ENCODE measurements at regions of chr12 and their contacts with region 1.

Region 1: DNA sequence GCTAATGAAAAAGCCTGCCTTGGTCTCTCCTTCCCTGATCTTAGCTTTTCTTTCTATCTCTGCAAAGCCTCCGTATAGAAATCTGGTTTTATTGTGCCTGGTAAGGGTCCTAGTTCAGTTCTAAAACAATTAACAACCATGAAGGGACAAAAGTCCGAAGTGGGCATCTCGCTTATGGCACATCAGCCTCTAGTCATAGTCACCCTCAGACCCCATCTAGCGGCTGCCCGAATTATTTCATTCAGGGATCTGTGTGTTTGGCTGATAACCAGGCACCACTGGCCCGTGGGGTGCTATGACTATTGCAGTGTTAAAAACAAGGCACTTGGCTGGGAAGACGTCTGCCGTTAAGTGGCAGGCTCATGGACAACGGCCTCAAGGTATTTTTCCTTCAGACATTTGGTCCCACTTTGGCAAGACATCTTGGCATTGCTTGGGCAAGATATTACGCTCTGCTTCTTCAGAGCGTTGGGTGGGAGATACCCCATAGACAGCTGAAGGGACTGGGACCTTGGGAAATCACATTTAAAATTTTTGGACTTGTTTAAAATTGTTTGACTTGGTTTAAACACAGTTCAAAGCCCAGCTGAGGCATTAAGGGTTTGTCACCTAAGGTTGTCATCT is 87.1 kb downstream of the SINHCAF start:
- DNase-seq: peak in 1 of 2 experiments; percentile 78
- H3K4me3 ChIP-seq: no peak overlapping the region
- H3K27ac ChIP-seq: no peak overlapping the region
- H3K4me1 ChIP-seq: peaks cover 0 to 5% (median 3%) of the 10 kb centered on the region in 4 experiments; a peak in 5 of 7 replicates
- H3K27me3 ChIP-seq: no peaks in the 10 kb centered on the region
- CTCF ChIP-seq: peak; percentile 62 to 78 (median 76)
- EP300 ChIP-seq: no peak
- POLR2A ChIP-seq: no peak
- RAD21 ChIP-seq: peak; percentile 60 to 79

Region 2: GRCh38 chr12:31220633-31221565 is 18.0 kb before region 1 on chr12:
- CTCF ChIA-PET with region 1: interaction called, 231 read pairs
- POLR2A ChIA-PET with region 1: no interaction called
- DNase-seq: no peak
- H3K4me3 ChIP-seq: no peak overlapping the region
- H3K27ac ChIP-seq: no peak overlapping the region
- H3K4me1 ChIP-seq: peaks cover 11 to 24% (median 16%) of the 10 kb centered on the region in 4 experiments
- H3K27me3 ChIP-seq: peaks cover 0 to 6% (median 1%) of the 10 kb centered on the region in 4 experiments; a peak in 3 of 7 replicates
- CTCF ChIP-seq: no peak
- EP300 ChIP-seq: no peak
- POLR2A ChIP-seq: no peak
- RAD21 ChIP-seq: no peak

Region 3: DNA sequence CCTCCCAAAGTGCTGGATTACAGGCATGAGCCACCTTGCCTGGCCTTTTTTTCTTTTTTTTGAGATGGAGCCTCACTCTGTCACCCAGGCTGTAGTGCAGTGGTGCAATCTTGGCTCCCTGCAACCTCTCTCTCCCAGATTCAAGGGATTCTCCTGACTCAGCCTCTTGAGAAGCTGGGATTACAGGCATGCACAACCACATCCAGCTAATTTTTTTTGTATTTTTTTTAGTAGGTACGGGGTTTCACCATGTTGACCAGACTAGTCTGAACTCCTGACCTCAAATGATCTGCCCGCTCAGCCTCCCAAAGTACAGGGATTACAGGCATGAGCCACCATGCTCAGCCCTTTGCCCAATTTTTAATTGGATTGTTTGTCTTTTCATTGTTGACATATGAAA is 29.1 kb after region 1 on chr12:
- CTCF ChIA-PET with region 1: interaction called, 21 read pairs
- POLR2A ChIA-PET with region 1: interaction called, 3 read pairs
- DNase-seq: no peak
- H3K4me3 ChIP-seq: no peak overlapping the region
- H3K27ac ChIP-seq: no peak overlapping the region
- H3K4me1 ChIP-seq: no peaks in the 10 kb centered on the region; a peak in 1 of 7 replicates
- H3K27me3 ChIP-seq: no peaks in the 10 kb centered on the region
- CTCF ChIP-seq: no peak
- EP300 ChIP-seq: no peak
- POLR2A ChIP-seq: no peak
- RAD21 ChIP-seq: no peak

Region 4: DNA sequence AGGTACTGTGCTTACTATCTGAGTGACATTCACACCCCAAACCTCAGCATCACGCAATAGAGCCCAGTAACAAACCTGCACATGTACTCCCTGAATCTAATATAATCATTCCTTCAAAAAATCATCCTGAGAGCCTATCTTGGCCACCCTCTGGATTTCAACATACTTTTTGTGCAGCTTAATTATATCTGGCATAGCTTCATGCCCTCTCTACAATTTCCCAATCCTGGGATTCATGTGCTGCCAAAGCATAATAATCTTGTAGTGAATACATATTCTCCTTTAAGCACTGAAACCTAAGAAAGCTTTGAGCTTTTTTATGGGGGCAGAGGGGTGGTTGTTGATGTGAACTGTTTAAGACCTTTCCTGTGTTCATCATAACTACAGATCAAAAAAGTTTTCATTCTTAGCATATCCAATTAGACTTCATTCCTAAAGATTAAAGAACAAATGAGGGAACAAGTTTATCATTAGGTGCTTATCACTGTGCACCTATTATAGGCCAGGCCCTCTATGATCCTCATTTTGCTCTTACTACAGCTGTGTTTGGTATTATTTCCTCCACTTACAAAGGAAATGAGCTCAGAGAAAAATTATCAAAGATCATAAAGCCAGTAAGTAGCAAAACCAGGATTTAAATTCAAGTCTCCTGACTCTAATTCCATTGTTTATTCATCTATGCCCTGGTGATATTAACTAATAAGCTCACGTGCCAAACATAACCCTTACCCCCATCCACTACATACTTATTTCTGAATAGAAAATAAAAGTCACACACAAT is 35.8 kb after region 1 on chr12:
- CTCF ChIA-PET with region 1: interaction called, 21 read pairs
- POLR2A ChIA-PET with region 1: interaction called, 3 read pairs
- DNase-seq: no peak
- H3K4me3 ChIP-seq: no peak overlapping the region
- H3K27ac ChIP-seq: no peak overlapping the region
- H3K4me1 ChIP-seq: no peaks in the 10 kb centered on the region; a peak in 2 of 7 replicates
- H3K27me3 ChIP-seq: no peaks in the 10 kb centered on the region
- CTCF ChIP-seq: no peak
- EP300 ChIP-seq: no peak
- POLR2A ChIP-seq: no peak
- RAD21 ChIP-seq: no peak

Region 5: DNA sequence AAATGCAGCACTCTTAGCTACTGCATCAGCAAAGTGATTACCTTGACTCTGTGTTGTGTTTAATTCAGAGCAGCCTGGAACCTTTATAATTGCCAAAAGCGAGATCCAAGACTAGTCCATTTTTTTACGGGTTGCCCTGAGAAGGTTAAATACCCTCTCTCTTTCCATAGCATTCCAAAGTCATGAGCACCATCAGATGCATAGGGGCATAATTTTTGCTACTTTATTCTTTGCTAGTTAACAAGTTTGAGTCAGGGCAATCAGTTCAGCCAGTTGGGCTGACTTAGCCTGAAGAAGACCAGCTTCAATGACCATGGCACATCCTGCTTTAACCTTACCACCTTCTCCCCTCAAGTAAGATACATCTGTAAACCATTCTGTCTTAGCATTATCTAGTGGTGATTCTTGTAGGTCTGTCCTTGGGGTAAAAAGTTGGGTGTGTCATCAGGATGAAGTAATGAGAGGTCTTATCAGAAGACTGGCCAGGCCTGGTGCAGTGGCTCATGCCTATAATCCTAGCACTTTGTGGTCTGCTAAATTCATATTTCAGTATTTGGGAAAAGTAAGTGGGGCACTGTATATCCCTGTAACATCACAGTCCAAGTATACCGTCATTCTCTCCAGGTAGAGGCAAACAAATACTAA is 67.9 kb after region 1 on chr12:
- CTCF ChIA-PET with region 1: no interaction called
- POLR2A ChIA-PET with region 1: no interaction called
- DNase-seq: no peak
- H3K4me3 ChIP-seq: no peak overlapping the region
- H3K27ac ChIP-seq: no peak overlapping the region
- H3K4me1 ChIP-seq: peaks cover 2 to 17% (median 8%) of the 10 kb centered on the region in 4 experiments; a peak in 5 of 7 replicates
- H3K27me3 ChIP-seq: no peaks in the 10 kb centered on the region
- CTCF ChIP-seq: no peak
- EP300 ChIP-seq: no peak
- POLR2A ChIP-seq: no peak
- RAD21 ChIP-seq: no peak

Measured in H1 (cell line).